WTC11 (cell line): ENCODE measurements at regions of chr13 and their contacts with region 1.

Region 1: GRCh38 chr13:104571161-104571892 is 1505.1 kb upstream of the SLC10A2 start:
- DNase-seq: peak; percentile 64
- ATAC-seq: peak; percentile 95
- H3K4me3 Mint-ChIP-seq: no peak overlapping the region
- H3K27ac Mint-ChIP-seq: no peak overlapping the region
- H3K4me1 Mint-ChIP-seq: peaks cover 4% of the 10 kb centered on the region; the same call in 1 of the 2 replicates
- H3K27me3 Mint-ChIP-seq: no peaks in the 10 kb centered on the region
- CTCF ChIP-seq: no peak; the same call in 1 of the 2 replicates

Region 2: DNA sequence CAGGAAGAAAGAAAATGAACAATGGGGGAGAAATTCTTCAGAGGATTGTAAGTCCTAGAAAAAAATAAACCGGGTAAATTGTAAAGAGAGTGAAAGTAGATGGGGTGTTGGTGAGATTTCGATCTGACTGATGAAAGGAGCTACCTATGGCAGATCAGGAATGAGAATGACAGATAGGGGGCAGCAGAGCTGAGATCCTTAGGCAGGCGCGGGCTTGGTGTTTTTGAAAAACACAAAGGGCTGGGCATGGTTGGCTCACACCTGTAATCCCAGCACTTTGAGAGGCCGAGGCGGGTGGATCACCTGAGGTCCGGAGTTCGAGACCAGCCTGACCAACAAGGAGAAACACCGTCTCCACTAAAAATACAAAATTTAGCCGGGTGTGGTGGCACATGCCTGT is 36.5 kb before region 1 on chr13:
- CTCF ChIA-PET with region 1: interaction called, 10 read pairs
- POLR2A ChIA-PET with region 1: no interaction called
- DNase-seq: peak; percentile 59
- ATAC-seq: peak; percentile 81
- H3K4me3 Mint-ChIP-seq: no peak overlapping the region
- H3K27ac Mint-ChIP-seq: no peak overlapping the region
- H3K4me1 Mint-ChIP-seq: peaks cover 26% of the 10 kb centered on the region
- H3K27me3 Mint-ChIP-seq: no peaks in the 10 kb centered on the region
- CTCF ChIP-seq: peak; percentile 38

Region 3: GRCh38 chr13:104737713-104738112 is 166.4 kb after region 1 on chr13:
- CTCF ChIA-PET with region 1: no interaction called
- POLR2A ChIA-PET with region 1: no interaction called
- DNase-seq: no peak
- ATAC-seq: no peak
- H3K4me3 Mint-ChIP-seq: no peak overlapping the region
- H3K27ac Mint-ChIP-seq: no peak overlapping the region; the same call in 1 of the 2 replicates
- H3K4me1 Mint-ChIP-seq: no peaks in the 10 kb centered on the region
- H3K27me3 Mint-ChIP-seq: no peaks in the 10 kb centered on the region
- CTCF ChIP-seq: no peak